Colonic mucosa (tissue), 4 donors: ENCODE measurements at regions of chr3 and their contacts with region 1.

Region 1: DNA sequence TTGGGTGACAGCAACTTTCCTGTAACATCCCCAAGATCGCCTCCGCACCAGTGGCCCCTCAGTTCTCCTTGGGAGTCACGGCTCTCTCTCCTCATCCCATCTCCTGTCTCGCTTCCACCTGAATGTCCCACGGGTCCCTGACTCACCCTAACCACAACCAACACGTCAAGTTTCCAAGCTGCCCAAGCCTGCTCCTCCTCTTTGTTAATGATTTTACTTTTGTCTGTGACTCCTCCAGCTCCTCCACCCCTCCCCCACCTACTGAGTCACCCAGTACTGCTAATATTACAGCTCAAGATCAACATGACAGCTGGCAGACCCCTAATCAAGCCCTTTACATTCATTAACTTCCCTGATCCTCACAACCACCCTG is 39.3 kb downstream of the BDH1 start:
- DNase-seq: no peak
- H3K4me3 ChIP-seq: no peak overlapping the region
- H3K27ac ChIP-seq: no peak overlapping the region
- H3K4me1 ChIP-seq: peaks cover 3% of the 10 kb centered on the region
- H3K27me3 ChIP-seq: no peaks in the 10 kb centered on the region
- CTCF ChIP-seq: no peak

Region 2: DNA sequence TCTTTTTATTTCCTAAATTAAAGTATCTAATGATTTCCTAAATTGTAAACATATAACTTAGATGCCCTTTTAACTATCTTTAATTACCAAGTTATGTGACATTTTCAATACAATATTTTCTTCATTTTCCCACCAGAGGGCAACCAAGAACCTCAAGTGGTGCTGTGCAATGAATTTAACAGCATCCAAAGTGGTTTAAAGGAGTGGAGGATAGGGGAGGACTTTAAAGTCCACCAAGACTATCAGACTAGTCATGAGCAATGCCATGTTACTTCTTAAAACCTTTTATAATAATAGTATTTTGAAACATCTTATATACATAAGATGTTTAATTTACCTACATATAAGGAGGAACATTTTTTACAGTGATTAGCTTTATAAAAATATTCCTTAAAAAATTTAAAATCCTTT is 292.5 kb before region 1 on chr3:
- intact Hi-C with region 1: loop called (anchors 10 kb)
- DNase-seq: no peak
- H3K4me3 ChIP-seq: no peak overlapping the region
- H3K27ac ChIP-seq: no peak overlapping the region
- H3K4me1 ChIP-seq: peaks cover 4% of the 10 kb centered on the region
- H3K27me3 ChIP-seq: no peaks in the 10 kb centered on the region
- CTCF ChIP-seq: peak; percentile 36

Region 3: GRCh38 chr3:197456261-197457091 is 60.0 kb before region 1 on chr3:
- intact Hi-C with region 1: no loop called
- DNase-seq: peak; percentile 83
- H3K4me3 ChIP-seq: peak overlapping the region; percentile 49
- H3K27ac ChIP-seq: peak overlapping the region; percentile 67
- H3K4me1 ChIP-seq: peaks cover 17% of the 10 kb centered on the region
- H3K27me3 ChIP-seq: no peaks in the 10 kb centered on the region
- CTCF ChIP-seq: no peak

Region 4: GRCh38 chr3:197564097-197564843 is 47.8 kb after region 1 on chr3:
- intact Hi-C with region 1: no loop called
- DNase-seq: no peak
- H3K4me3 ChIP-seq: no peak overlapping the region
- H3K27ac ChIP-seq: no peak overlapping the region
- H3K4me1 ChIP-seq: no peaks in the 10 kb centered on the region
- H3K27me3 ChIP-seq: no peaks in the 10 kb centered on the region
- CTCF ChIP-seq: no peak

Region 5: GRCh38 chr3:197590313-197590962 is 73.9 kb after region 1 on chr3:
- intact Hi-C with region 1: no loop called
- DNase-seq: peak; percentile 89
- H3K4me3 ChIP-seq: no peak overlapping the region
- H3K27ac ChIP-seq: peak overlapping the region; percentile 94
- H3K4me1 ChIP-seq: no peaks in the 10 kb centered on the region
- H3K27me3 ChIP-seq: no peaks in the 10 kb centered on the region
- CTCF ChIP-seq: no peak

Region 6: DNA sequence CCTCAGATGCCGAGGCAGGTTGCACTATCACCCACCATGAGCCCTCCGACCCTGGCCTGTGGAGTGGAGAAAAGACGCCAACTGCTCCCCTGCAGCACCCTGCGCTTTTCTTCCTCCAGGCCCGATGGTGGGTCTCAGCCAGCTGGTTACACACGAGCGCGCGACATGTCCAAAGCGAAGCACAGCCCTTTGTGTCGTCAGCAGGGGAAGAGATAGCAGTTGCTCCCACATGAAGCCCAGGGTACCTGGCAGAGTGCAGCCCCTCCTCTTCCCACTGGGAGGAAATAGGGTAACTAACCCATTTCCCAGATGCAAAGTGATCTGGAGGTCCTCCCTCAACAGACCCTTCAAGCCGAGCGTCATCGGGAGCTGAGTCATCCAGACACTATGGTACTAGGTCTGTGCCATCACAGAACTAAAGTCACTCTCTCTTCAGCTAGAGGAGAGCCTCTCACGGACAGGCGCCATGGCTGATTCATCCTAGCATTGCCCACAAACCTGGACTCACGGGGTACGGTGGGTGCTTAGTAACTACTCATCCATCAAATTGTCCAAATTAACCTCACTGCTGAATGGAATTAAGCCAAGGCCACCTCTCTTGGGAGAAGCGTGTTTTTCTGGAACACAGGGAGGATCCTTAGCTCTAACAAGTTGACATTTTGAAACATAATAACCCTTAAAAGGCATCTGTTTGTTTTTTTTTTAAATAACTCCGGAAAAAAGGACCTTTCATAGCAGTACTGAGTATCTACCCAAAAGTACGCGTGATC is 84.5 kb after region 1 on chr3:
- intact Hi-C with region 1: no loop called
- DNase-seq: no peak
- H3K4me3 ChIP-seq: no peak overlapping the region
- H3K27ac ChIP-seq: no peak overlapping the region
- H3K4me1 ChIP-seq: peaks cover 7% of the 10 kb centered on the region
- H3K27me3 ChIP-seq: no peaks in the 10 kb centered on the region
- CTCF ChIP-seq: no peak